ENCODE measurements at regions of chr17 and their contacts with region 1.

Region 1: DNA sequence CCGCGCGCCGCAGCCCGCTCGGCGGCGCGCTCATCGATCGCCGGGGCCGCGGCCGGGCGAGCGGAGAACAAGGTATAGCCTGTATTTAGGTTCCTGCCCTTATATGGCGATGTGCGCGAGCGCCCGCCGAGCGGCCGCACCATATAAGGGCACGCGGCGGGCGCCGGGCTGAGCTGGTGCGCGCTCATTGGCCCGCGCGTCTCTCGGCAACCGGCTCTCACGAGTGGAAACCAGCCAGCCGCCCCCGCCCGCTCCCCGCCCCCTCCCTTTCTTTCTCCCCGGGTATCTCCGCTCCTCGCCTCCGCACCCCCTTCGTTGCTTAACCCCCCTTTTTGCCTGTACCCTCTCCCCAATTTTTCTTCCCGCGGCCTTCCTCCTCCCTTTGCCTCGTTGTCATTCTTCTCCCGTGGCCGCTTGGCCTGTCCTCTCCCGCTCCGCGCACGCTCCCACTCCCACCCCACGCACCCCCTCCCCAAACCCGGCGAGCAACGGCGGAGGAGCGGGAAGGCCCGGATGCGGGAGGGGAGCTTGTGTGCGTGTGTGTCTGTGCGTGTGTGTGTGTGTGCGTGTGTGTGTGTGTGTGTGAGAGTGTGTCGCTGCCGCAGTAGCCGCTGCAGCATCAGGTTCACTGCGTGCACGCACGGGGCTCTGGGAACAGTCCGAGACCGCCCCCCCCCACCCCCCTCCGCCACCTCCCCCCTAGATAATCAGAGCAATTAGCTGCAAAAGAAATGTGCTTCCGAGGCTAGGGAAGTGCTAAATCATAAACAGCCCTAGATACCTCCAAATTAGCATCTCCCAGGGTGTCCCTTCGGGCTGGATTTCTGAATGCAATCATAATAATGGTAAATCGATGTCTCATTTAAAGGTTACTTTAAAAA is 13.5 kb upstream of the CBX8 start:
- DNase-seq: peak; percentile 71 to 88 (median 80)
- ATAC-seq: peak; percentile 57 to 85 (median 82)
- H3K4me3 ChIP-seq: peak overlapping the region in 10 of 12 donors; percentile 6 to 46 (median 30)
- H3K27ac ChIP-seq: no peak overlapping the region
- H3K4me1 ChIP-seq: peaks cover 4 to 60% (median 33%) of the 10 kb centered on the region in 12 donors
- H3K27me3 ChIP-seq: peaks cover 73 to 94% (median 91%) of the 10 kb centered on the region in 9 donors
- CTCF ChIP-seq: no peak
- POLR2A ChIP-seq: no peak

Region 2: GRCh38 chr17:79741751-79742588 is 68.4 kb before region 1 on chr17:
- intact Hi-C with region 1: loop called in 2 of 10 experiments (anchors 2 to 10 kb)
- DNase-seq: peak; percentile 62 to 88 (median 69)
- ATAC-seq: peak in 3 of 4 donors; percentile 65 to 77 (median 70)
- H3K4me3 ChIP-seq: peak overlapping the region in 4 of 12 donors; percentile 21 to 32 (median 24)
- H3K27ac ChIP-seq: no peak overlapping the region
- H3K4me1 ChIP-seq: peaks cover 0 to 18% (median 7%) of the 10 kb centered on the region in 12 donors
- H3K27me3 ChIP-seq: peaks cover 16 to 71% (median 52%) of the 10 kb centered on the region in 9 donors
- CTCF ChIP-seq: peak; percentile 85 to 97 (median 93)
- POLR2A ChIP-seq: no peak

Region 3: GRCh38 chr17:79749156-79749815 is 61.1 kb before region 1 on chr17:
- intact Hi-C with region 1: loop called in 2 of 10 experiments (anchors 2 to 10 kb)
- DNase-seq: no peak
- ATAC-seq: no peak
- H3K4me3 ChIP-seq: no peak overlapping the region
- H3K27ac ChIP-seq: no peak overlapping the region
- H3K4me1 ChIP-seq: peaks cover 0 to 21% (median 5%) of the 10 kb centered on the region in 12 donors
- H3K27me3 ChIP-seq: peaks cover 27 to 88% (median 72%) of the 10 kb centered on the region in 9 donors
- CTCF ChIP-seq: no peak
- POLR2A ChIP-seq: no peak

Region 4: DNA sequence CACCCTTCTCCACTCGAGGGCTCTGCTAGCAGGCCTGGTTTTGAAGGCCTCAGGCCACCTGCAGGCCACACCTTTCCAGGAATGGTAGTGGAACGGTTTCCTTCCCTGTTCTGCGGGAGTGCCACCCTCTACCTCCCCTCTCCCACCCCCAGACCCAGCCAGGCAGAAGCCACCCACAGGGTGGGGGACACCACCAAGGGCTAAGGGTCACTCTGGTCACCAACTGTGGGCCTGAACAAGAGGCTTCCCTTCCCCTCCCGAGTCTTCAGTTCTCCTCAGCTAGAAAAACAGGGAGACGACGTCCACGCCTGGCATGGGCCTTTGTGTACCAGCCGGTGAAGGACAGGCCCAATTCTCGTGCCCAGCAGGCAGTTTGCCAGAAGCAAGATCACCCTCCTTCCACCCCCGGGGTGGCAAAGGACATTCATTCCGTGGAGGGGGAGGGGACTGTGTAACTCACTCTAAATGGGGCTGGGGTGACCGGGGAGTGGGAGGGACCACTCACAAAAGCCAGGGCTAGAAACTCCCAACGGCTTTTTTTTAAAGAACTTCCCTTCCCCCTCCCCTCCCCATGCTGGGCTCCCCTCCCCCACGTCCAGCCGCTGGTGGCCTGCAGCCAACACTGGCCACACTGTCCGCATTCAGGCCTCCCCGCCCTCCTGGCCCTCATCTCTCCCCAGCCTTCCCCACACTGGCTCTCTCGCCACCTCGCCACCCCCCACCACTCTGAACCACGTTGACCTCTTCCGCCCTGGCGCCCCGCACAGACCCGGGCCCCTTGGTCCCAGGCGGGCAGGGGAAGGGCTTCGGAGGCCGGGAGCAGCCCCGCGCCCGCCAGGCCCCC is 21.2 kb after region 1 on chr17:
- intact Hi-C with region 1: loop called in 1 of 10 experiments (anchors 2 kb)
- DNase-seq: peak; percentile 72 to 86 (median 81)
- ATAC-seq: peak; percentile 59 to 75 (median 67)
- H3K4me3 ChIP-seq: peak overlapping the region in 11 of 12 donors; percentile 1 to 55 (median 48)
- H3K27ac ChIP-seq: peak overlapping the region; percentile 35 to 90 (median 80)
- H3K4me1 ChIP-seq: peaks cover 0 to 61% (median 39%) of the 10 kb centered on the region in 12 donors
- H3K27me3 ChIP-seq: no peaks in the 10 kb centered on the region
- CTCF ChIP-seq: no peak
- POLR2A ChIP-seq: no peak

Region 5: DNA sequence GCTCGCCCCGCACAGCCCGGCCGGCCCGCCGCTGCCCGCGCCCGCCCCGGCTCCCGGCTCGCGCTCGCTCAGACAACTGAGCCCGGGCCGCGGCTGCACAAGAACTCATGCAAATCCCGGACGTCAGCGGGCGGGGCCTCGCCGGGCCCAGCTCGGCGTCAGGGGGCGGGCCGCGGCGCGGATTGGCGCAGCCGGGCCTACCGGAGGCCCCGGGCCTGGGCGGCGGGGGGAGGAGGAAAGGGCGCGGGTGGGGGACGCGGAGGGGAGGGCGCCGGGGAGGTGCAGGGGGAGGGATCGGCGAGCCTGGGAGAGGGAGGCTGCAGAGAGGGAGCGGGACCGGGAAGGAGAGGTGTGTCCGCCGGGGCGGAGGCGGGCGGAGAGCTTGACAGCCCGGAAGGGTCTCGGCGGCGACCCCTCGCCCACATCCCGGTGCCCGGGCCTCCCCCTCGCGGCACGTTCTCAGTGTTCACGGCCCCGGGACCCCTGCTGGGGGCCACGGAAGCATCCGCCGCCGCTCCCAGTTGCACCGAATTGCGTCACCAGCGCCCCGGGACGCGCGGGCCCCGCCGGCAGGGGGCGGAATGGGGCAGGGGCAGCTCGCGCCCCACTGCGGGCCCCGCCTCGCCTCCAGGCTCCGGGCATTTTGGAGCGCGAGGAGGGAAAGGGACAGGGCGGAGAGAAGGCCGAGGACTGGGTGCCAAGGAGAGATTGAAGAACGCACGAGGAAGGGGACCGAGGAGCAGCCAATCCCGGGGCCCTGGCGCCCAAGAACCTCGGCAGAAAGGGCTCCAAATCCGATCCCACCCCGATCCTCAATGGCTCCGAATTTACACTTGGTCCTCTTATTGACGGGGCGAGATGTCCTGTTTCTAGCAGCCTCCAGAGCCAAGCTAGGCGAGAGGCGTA is 29.2 kb after region 1 on chr17 and contains the start of gene CBX4:
- intact Hi-C with region 1: loop called in 4 of 10 experiments (anchors 2 to 5 kb)
- DNase-seq: peak; percentile 96 to 98 (median 97)
- ATAC-seq: peak; percentile 79 to 84 (median 82)
- H3K4me3 ChIP-seq: peak within 1 kb of the TSS; percentile 53 to 99 (median 82)
- H3K27ac ChIP-seq: peak within 1 kb of the TSS; percentile 71 to 97 (median 94)
- H3K4me1 ChIP-seq: peaks cover 0 to 81% (median 64%) of the 10 kb centered on the region in 12 donors
- H3K27me3 ChIP-seq: peaks cover 27 to 48% (median 38%) of the 10 kb centered on the region in 9 donors
- CTCF ChIP-seq: peak; percentile 37 to 79 (median 66)
- POLR2A ChIP-seq: peak in 1 of 2 donors; percentile 85
- total RNA-seq, gene CBX4: 16.7 to 41.1 (median 26.9) TPM

Region 6: DNA sequence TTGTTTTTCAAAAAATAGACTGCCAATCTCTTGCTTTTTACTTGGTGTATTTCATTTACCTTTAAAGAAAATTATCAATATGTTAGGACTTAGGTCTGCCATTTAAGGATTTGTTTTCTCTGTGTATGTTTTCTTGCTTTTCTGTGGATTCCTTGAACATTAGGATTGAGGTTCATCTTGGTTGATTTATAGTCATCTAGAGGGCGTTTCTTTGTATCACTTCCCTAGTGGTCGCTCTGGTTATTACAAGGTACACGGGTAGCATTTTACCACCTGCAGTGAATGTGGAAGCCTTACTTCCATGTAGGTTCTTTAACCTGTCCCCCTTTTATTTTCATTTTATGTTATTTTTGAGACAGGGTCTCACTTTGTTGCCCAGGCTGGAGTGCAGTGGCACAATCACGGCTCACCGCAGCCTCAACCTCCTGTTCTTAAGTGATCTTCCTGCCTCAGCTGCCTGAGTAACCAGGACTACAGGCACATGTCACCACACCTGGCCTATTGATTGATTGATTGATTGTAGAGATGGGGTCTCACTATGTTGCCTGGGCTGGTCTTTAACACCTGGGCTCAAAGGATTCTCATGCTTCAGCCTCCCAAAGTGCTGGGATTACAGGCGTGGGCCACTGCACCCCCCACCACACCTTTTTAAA is 64.1 kb after region 1 on chr17:
- intact Hi-C with region 1: loop called in 1 of 10 experiments (anchors 5 kb)
- DNase-seq: no peak
- ATAC-seq: no peak
- H3K4me3 ChIP-seq: no peak overlapping the region
- H3K27ac ChIP-seq: no peak overlapping the region
- H3K4me1 ChIP-seq: no peaks in the 10 kb centered on the region
- H3K27me3 ChIP-seq: peaks cover 0 to 16% (median 4%) of the 10 kb centered on the region in 9 donors
- CTCF ChIP-seq: peak in 11 of 12 donors; percentile 28 to 59 (median 43)
- POLR2A ChIP-seq: no peak

Region 7: GRCh38 chr17:79970576-79971068 is 160.3 kb after region 1 on chr17:
- intact Hi-C with region 1: loop called in 1 of 10 experiments (anchors 10 kb)
- DNase-seq: peak in 1 of 5 donors; percentile 62
- ATAC-seq: peak in 2 of 4 donors; percentile 46 to 47
- H3K4me3 ChIP-seq: no peak overlapping the region
- H3K27ac ChIP-seq: no peak overlapping the region
- H3K4me1 ChIP-seq: no peaks in the 10 kb centered on the region
- H3K27me3 ChIP-seq: no peaks in the 10 kb centered on the region
- CTCF ChIP-seq: peak in 11 of 12 donors; percentile 20 to 49 (median 44)
- POLR2A ChIP-seq: no peak

Measured in heart left ventricle (tissue), 16 donors.